ENCODE measurements at regions of chr6 and their contacts with region 1.

Region 1: DNA sequence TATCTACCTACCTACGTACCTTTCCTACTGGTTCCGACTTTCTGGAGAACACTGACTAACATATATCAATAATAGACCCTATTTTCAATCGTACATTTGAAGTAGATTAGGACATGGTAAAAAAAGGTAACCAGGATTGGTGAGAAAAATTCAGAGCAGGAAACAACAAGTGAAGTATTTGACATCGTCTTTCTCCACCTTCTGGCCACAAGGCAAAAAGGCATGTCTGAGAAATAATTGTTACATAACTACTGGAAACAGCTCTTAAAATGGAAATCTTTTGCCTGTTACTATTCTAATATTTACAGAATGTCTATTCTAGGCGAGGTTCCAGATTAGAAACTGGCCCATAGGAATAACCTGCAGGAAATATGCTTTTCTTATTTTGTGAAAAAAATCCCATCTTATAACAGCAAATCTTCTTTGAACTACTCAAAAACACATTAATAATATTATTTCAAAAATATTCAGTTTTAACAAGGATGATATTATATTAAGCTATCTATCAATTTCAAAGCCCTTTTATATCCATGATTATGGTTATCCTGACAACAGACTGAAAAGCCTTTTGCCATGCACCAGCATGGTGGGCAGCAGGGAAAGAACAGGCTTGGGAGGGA is 80.8 kb downstream of the RCAN2 start:
- DNase-seq: peak in 1 of 2 donors; percentile 37
- ATAC-seq: peak in 7 of 8 donors; percentile 19 to 53 (median 41)
- H3K4me3 ChIP-seq: no peak overlapping the region
- H3K27ac ChIP-seq: peak overlapping the region in 6 of 10 donors; percentile 24 to 62 (median 52)
- H3K4me1 ChIP-seq: peaks cover 2 to 84% (median 58%) of the 10 kb centered on the region in 9 donors
- H3K27me3 ChIP-seq: no peaks in the 10 kb centered on the region
- CTCF ChIP-seq: peak; percentile 47 to 88 (median 84)

Region 2: GRCh38 chr6:46221222-46221793 is 189.1 kb before region 1 on chr6:
- intact Hi-C with region 1: loop called in 9 of 10 experiments (anchors 1 to 5 kb)
- DNase-seq: no peak
- ATAC-seq: peak in 7 of 8 donors; percentile 60 to 81 (median 70)
- H3K4me3 ChIP-seq: no peak overlapping the region
- H3K27ac ChIP-seq: no peak overlapping the region
- H3K4me1 ChIP-seq: peaks cover 0 to 39% (median 11%) of the 10 kb centered on the region in 9 donors
- H3K27me3 ChIP-seq: no peaks in the 10 kb centered on the region
- CTCF ChIP-seq: peak; percentile 60 to 91 (median 83)

Region 3: DNA sequence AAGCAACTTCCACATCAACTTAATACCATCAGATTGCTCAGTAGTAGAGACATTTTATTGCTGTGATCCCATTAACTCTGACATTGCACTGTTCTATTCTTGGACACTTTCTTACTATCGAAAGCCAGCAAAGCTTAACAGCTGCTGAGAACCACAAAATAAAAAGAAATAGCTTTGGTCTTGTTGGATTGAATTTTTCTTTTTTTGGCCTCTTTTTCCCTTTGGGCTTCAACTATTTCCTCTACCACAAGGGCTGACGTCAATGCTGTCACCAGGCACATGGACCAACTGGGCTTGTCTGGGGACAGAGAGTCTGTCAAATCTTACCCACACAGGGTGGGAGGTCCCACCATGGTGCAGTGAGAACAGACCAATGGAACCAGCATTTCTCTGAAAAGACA is 176.3 kb before region 1 on chr6:
- intact Hi-C with region 1: loop called in 1 of 10 experiments (anchors 5 kb)
- DNase-seq: peak in 1 of 2 donors; percentile 58
- ATAC-seq: peak; percentile 62 to 90 (median 76)
- H3K4me3 ChIP-seq: no peak overlapping the region
- H3K27ac ChIP-seq: peak overlapping the region; percentile 1 to 78 (median 46)
- H3K4me1 ChIP-seq: peaks cover 0 to 59% (median 30%) of the 10 kb centered on the region in 9 donors
- H3K27me3 ChIP-seq: no peaks in the 10 kb centered on the region
- CTCF ChIP-seq: no peak

Region 4: GRCh38 chr6:46760925-46761324 is 350.5 kb after region 1 on chr6:
- intact Hi-C with region 1: loop called in 1 of 10 experiments (anchors 5 kb)
- DNase-seq: no peak
- ATAC-seq: no peak
- H3K4me3 ChIP-seq: no peak overlapping the region
- H3K27ac ChIP-seq: no peak overlapping the region
- H3K4me1 ChIP-seq: peaks cover 0 to 12% (median 9%) of the 10 kb centered on the region in 9 donors
- H3K27me3 ChIP-seq: peaks cover 0 to 3% (median 0%) of the 10 kb centered on the region in 7 donors
- CTCF ChIP-seq: no peak

Measured in heart right ventricle (tissue), 16 donors.